ENCODE measurements at regions of chr3 and their contacts with region 1.

Region 1: DNA sequence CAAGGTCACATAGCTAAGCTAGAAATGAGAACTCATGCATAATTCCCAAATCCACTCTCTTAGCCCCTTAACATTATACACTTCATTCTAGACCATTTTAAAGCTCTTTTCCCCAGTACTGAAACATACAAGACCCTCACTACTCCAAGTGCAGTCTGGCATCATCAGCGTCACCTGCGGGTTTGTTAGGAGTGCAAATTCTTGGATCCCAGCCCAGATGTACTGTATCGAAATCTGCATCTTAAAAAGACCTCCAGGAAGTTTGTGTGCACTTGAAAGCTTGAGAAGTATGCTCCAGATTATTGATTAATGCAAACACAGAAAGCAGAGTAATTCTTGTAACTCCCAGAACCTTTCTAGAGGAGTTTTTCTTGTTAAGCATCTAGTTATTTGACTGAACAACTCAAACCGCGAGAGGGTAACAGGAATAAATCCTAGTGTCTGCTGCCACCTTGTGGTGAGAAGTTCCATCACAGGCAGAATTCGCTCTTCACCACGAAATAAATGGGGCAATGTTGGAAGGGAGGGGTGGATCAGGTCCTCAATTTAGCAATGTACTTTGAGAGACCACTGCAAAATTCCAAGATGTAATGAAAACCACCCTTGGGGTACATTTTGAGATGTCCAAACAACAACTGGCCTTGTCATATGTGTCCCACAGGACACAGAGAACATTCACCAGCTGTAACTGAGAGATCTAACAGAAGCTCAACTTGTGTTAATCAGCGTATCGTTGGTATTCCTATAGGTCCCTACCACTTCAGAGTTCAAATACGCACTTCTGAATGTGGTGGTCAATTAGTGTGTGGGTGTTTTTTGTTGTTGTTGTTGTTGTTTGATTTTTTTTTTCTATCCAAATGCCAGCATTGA is 583 bp upstream of the C3orf49 start:
- DNase-seq: peak; percentile 21
- ATAC-seq: peak; percentile 31
- H3K4me3 Mint-ChIP-seq: no peak overlapping the region
- H3K27ac Mint-ChIP-seq: no peak overlapping the region
- H3K4me1 Mint-ChIP-seq: no peaks in the 10 kb centered on the region
- H3K27me3 Mint-ChIP-seq: no peaks in the 10 kb centered on the region
- CTCF ChIP-seq: peak; percentile 43

Region 2: GRCh38 chr3:62201438-62202035 is 1617.0 kb before region 1 on chr3:
- CTCF ChIA-PET with region 1: interaction called, 3 read pairs
- POLR2A ChIA-PET with region 1: no interaction called
- intact Hi-C with region 1: loop called (anchors 5 kb)
- DNase-seq: no peak
- ATAC-seq: no peak
- H3K4me3 Mint-ChIP-seq: no peak overlapping the region
- H3K27ac Mint-ChIP-seq: no peak overlapping the region
- H3K4me1 Mint-ChIP-seq: no peaks in the 10 kb centered on the region
- H3K27me3 Mint-ChIP-seq: no peaks in the 10 kb centered on the region
- CTCF ChIP-seq: no peak

Region 3: GRCh38 chr3:62622553-62623193 is 1195.8 kb before region 1 on chr3:
- CTCF ChIA-PET with region 1: interaction called, 7 read pairs
- POLR2A ChIA-PET with region 1: no interaction called
- intact Hi-C with region 1: loop called (anchors 1 kb)
- DNase-seq: no peak
- ATAC-seq: no peak
- H3K4me3 Mint-ChIP-seq: no peak overlapping the region
- H3K27ac Mint-ChIP-seq: no peak overlapping the region
- H3K4me1 Mint-ChIP-seq: peaks cover 2% of the 10 kb centered on the region
- H3K27me3 Mint-ChIP-seq: no peaks in the 10 kb centered on the region
- CTCF ChIP-seq: no peak

Region 4: DNA sequence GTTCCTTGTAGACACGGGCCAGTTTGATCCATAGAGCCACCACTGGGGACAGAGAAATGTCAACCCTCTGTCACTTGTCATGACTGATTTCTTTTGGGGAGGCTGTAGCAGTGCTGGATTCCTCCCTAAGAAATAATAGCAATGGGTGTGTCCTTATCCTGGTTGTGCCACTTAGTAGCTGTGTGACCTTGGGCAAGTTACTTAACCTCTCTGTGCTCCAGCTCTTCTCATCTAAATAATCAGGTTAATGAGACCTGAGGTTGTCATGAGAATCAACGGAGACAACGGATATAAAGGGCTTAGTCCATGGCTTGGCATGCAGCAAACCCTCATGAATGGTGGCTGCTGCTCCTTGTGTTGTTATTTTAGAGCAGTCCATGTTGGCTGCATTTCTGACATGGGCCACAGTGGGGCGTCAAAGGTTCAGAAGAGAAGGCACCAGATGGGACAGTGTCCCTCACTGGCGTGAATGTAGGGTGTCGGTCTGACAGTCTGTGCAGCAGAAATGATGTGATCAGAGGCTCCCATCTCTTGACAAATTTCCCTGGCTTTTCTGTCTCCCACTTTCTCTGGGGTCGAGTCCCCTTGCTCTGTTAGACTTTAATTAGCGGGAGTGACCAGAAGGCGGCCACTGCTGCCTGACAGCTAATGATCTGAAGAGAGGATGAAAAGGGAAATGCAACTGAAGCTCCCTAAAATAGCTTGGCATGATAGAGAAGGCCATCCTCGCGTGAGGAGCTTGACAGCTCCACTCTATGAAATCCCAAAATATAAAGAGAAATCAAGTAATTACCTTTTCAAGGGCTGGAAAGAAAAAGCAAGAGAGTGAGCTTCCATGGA is 1152.7 kb before region 1 on chr3:
- CTCF ChIA-PET with region 1: no interaction called
- POLR2A ChIA-PET with region 1: no interaction called
- intact Hi-C with region 1: loop called (anchors 5 kb)
- DNase-seq: no peak
- ATAC-seq: no peak
- H3K4me3 Mint-ChIP-seq: no peak overlapping the region
- H3K27ac Mint-ChIP-seq: no peak overlapping the region
- H3K4me1 Mint-ChIP-seq: no peaks in the 10 kb centered on the region
- H3K27me3 Mint-ChIP-seq: no peaks in the 10 kb centered on the region
- CTCF ChIP-seq: no peak

Region 5: DNA sequence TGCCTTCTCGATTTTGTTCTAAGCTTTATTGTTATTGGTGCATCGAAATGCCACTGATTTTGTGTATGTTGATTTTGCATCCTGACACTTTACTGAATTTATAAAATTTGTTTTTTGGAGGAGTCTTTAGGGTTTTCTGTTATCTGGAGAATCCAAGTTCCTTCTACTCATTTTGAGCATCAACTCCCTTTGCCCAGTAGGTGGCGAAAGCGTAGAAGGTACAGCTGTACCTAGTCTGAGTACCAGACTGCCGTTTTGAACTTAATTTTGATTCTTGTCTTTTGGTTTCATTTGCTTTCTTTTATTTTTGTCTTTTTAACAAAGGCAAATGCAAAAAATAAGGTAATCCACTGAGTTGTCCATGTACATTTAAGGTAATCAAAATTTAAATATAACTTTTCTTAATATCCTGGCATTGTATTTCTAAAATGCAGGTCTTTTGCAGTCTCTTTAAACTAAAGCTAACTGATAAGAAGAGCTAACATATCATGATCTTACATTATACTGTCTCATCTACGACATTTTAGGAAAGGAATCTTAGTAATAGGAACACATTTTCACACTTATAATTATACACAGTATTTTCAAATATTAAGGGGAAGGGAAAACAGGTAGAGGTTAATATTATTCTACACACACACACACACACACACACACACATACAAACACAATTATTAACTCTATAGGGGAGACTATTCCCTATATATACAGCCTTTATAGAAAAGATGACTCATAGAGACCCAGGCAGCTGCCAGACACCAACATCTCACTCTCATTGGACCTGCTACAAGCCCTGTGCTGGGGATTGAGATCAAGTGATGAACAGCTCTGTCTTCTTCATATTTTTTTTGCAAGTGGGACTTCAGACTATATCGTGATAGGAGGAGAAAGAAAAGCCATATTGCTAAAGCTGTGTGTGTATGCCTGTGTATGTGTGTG is 468.7 kb before region 1 on chr3:
- CTCF ChIA-PET with region 1: interaction called, 25 read pairs
- POLR2A ChIA-PET with region 1: no interaction called
- intact Hi-C with region 1: no loop called
- DNase-seq: no peak
- ATAC-seq: no peak
- H3K4me3 Mint-ChIP-seq: no peak overlapping the region
- H3K27ac Mint-ChIP-seq: no peak overlapping the region
- H3K4me1 Mint-ChIP-seq: no peaks in the 10 kb centered on the region
- H3K27me3 Mint-ChIP-seq: peaks cover 16% of the 10 kb centered on the region
- CTCF ChIP-seq: no peak

Region 6: DNA sequence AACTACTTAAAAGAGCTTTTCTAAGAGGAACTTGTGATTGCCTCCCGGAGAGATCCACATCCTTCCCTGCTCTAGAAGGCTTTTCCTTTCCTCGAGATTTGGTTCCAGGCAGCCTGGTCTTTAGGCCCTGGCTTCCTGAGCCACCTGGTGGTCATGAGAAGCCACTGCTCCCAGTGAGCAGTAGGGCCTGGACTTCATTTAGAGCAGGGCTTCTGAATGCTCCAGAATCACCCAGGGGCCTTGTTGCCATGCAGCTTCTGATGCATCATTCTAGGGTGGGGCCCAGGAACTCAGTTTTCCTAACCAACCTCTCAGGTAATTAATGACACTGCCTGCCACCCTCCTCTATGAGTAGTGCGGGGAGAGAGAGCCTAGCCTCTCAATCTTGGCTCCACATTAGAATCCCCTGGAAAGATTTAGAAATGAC is 175.2 kb after region 1 on chr3:
- CTCF ChIA-PET with region 1: interaction called, 4 read pairs
- POLR2A ChIA-PET with region 1: no interaction called
- intact Hi-C with region 1: loop called (anchors 1 kb)
- DNase-seq: peak; percentile 20
- ATAC-seq: peak; percentile 83
- H3K4me3 Mint-ChIP-seq: no peak overlapping the region
- H3K27ac Mint-ChIP-seq: no peak overlapping the region
- H3K4me1 Mint-ChIP-seq: no peaks in the 10 kb centered on the region
- H3K27me3 Mint-ChIP-seq: no peaks in the 10 kb centered on the region
- CTCF ChIP-seq: peak; percentile 36